B cell (primary cell): ENCODE measurements at regions of chr1 and their contacts with region 1.

Region 1: GRCh38 chr1:107246775-107247345 is 106.0 kb downstream of the NTNG1 start:
- DNase-seq: peak; percentile 60
- ATAC-seq: peak; percentile 70
- H3K4me3 ChIP-seq: peak overlapping the region in 3 of 5 experiments; percentile 0 to 47 (median 27)
- H3K4me3 Mint-ChIP-seq: peak overlapping the region; percentile 73
- H3K27ac ChIP-seq: peak overlapping the region; percentile 65 to 79
- H3K27ac Mint-ChIP-seq: peak overlapping the region; percentile 93
- H3K4me1 ChIP-seq: peaks cover 10 to 44% of the 10 kb centered on the region in 2 donors
- H3K4me1 Mint-ChIP-seq: peaks cover 44% of the 10 kb centered on the region
- H3K27me3 ChIP-seq: no peaks in the 10 kb centered on the region
- H3K27me3 Mint-ChIP-seq: no peaks in the 10 kb centered on the region
- CTCF ChIP-seq: no peak

Region 2: GRCh38 chr1:107142140-107142542 is 104.7 kb before region 1 on chr1:
- CTCF ChIA-PET with region 1: no interaction called
- POLR2A ChIA-PET with region 1: no interaction called
- intact Hi-C with region 1: loop called (anchors 5 kb)
- DNase-seq: peak; percentile 57
- ATAC-seq: no peak
- H3K4me3 ChIP-seq: peak overlapping the region; percentile 39 to 75 (median 56)
- H3K4me3 Mint-ChIP-seq: peak overlapping the region; percentile 95
- H3K27ac ChIP-seq: no peak overlapping the region
- H3K27ac Mint-ChIP-seq: no peak overlapping the region
- H3K4me1 ChIP-seq: peaks cover 18 to 20% of the 10 kb centered on the region in 2 donors
- H3K4me1 Mint-ChIP-seq: peaks cover 21% of the 10 kb centered on the region
- H3K27me3 ChIP-seq: peaks cover 0 to 27% (median 18%) of the 10 kb centered on the region in 4 experiments
- H3K27me3 Mint-ChIP-seq: peaks cover 23% of the 10 kb centered on the region
- CTCF ChIP-seq: peak; percentile 96

Region 3: GRCh38 chr1:107196973-107197562 is 49.8 kb before region 1 on chr1:
- CTCF ChIA-PET with region 1: interaction called, 10 read pairs
- POLR2A ChIA-PET with region 1: no interaction called
- intact Hi-C with region 1: no loop called
- DNase-seq: peak; percentile 68
- ATAC-seq: peak; percentile 60
- H3K4me3 ChIP-seq: no peak overlapping the region
- H3K4me3 Mint-ChIP-seq: no peak overlapping the region
- H3K27ac ChIP-seq: no peak overlapping the region
- H3K27ac Mint-ChIP-seq: no peak overlapping the region
- H3K4me1 ChIP-seq: peaks cover 0 to 3% of the 10 kb centered on the region in 2 donors
- H3K4me1 Mint-ChIP-seq: peaks cover 3% of the 10 kb centered on the region
- H3K27me3 ChIP-seq: no peaks in the 10 kb centered on the region
- H3K27me3 Mint-ChIP-seq: no peaks in the 10 kb centered on the region
- CTCF ChIP-seq: peak; percentile 71

Region 4: GRCh38 chr1:107277022-107277421 is 30.2 kb after region 1 on chr1:
- CTCF ChIA-PET with region 1: interaction called, 16 read pairs
- POLR2A ChIA-PET with region 1: no interaction called
- intact Hi-C with region 1: no loop called
- DNase-seq: peak; percentile 35
- ATAC-seq: no peak
- H3K4me3 ChIP-seq: no peak overlapping the region
- H3K4me3 Mint-ChIP-seq: no peak overlapping the region
- H3K27ac ChIP-seq: no peak overlapping the region
- H3K27ac Mint-ChIP-seq: no peak overlapping the region
- H3K4me1 ChIP-seq: peaks cover 2 to 5% of the 10 kb centered on the region in 2 donors
- H3K4me1 Mint-ChIP-seq: peaks cover 15% of the 10 kb centered on the region
- H3K27me3 ChIP-seq: no peaks in the 10 kb centered on the region
- H3K27me3 Mint-ChIP-seq: no peaks in the 10 kb centered on the region
- CTCF ChIP-seq: peak; percentile 34

Region 5: GRCh38 chr1:107326824-107327445 is 80.1 kb after region 1 on chr1:
- CTCF ChIA-PET with region 1: no interaction called
- POLR2A ChIA-PET with region 1: no interaction called
- intact Hi-C with region 1: no loop called
- DNase-seq: no peak
- ATAC-seq: no peak
- H3K4me3 ChIP-seq: no peak overlapping the region
- H3K4me3 Mint-ChIP-seq: no peak overlapping the region
- H3K27ac ChIP-seq: no peak overlapping the region
- H3K27ac Mint-ChIP-seq: no peak overlapping the region
- H3K4me1 ChIP-seq: peaks cover 4 to 6% of the 10 kb centered on the region in 2 donors
- H3K4me1 Mint-ChIP-seq: peaks cover 17% of the 10 kb centered on the region
- H3K27me3 ChIP-seq: no peaks in the 10 kb centered on the region
- H3K27me3 Mint-ChIP-seq: peaks cover 2% of the 10 kb centered on the region
- CTCF ChIP-seq: no peak

Region 6: GRCh38 chr1:107450899-107451664 is 204.2 kb after region 1 on chr1:
- CTCF ChIA-PET with region 1: no interaction called
- POLR2A ChIA-PET with region 1: interaction called, 5 read pairs
- intact Hi-C with region 1: loop called (anchors 2 kb)
- DNase-seq: peak; percentile 80
- ATAC-seq: peak; percentile 73
- H3K4me3 ChIP-seq: peak overlapping the region; percentile 12 to 62 (median 35)
- H3K4me3 Mint-ChIP-seq: peak overlapping the region; percentile 84
- H3K27ac ChIP-seq: peak overlapping the region; percentile 91 to 97
- H3K27ac Mint-ChIP-seq: peak overlapping the region; percentile 90
- H3K4me1 ChIP-seq: peaks cover 65 to 73% of the 10 kb centered on the region in 2 donors
- H3K4me1 Mint-ChIP-seq: peaks cover 80% of the 10 kb centered on the region
- H3K27me3 ChIP-seq: no peaks in the 10 kb centered on the region
- H3K27me3 Mint-ChIP-seq: no peaks in the 10 kb centered on the region
- CTCF ChIP-seq: no peak